ENCODE measurements at regions of chr7 and their contacts with region 1.

Region 1: GRCh38 chr7:28096713-28097112 is 83.9 kb downstream of the JAZF1 start:
- H3K4me3 ChIP-seq: no peak overlapping the region
- H3K27ac ChIP-seq: no peak overlapping the region
- H3K4me1 ChIP-seq: no peaks in the 10 kb centered on the region
- CTCF ChIP-seq: no peak

Region 2: DNA sequence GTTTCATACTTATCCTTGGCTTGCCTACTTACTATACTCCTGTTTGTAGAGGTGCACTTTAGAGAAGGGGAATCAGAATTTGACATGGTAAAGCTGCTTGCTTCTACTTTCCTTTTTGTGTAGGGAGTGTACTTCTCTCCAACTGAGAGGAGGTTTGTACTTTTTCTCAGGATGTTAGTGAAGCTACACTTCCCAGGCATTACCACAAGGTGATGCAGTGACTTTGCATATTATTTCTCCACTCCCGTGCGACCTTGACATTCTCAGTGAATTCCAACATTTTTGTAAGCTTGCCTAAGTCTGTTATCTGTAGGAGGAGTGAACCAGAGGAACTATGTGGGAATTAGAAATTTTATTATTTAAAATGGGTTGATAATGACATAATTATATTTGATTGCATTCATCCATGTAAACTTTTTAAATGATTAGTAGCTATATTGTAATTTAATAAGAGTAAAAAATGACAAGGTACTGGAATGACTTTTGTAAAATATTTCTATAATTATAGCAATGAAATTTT is 351.6 kb before region 1 on chr7:
- CTCF ChIA-PET with region 1: interaction called, 16 read pairs
- POLR2A ChIA-PET with region 1: no interaction called
- H3K4me3 ChIP-seq: no peak overlapping the region
- H3K27ac ChIP-seq: no peak overlapping the region
- H3K4me1 ChIP-seq: peaks cover 9% of the 10 kb centered on the region
- CTCF ChIP-seq: no peak; the same call in 1 of the 2 replicates

Region 3: GRCh38 chr7:28044825-28045224 is 51.9 kb before region 1 on chr7:
- CTCF ChIA-PET with region 1: interaction called, 29 read pairs
- POLR2A ChIA-PET with region 1: no interaction called
- H3K4me3 ChIP-seq: no peak overlapping the region
- H3K27ac ChIP-seq: no peak overlapping the region
- H3K4me1 ChIP-seq: no peaks in the 10 kb centered on the region
- CTCF ChIP-seq: no peak

Region 4: GRCh38 chr7:28062197-28062991 is 34.3 kb before region 1 on chr7:
- CTCF ChIA-PET with region 1: interaction called, 82 read pairs
- POLR2A ChIA-PET with region 1: interaction called, 4 read pairs
- H3K4me3 ChIP-seq: peak overlapping the region; percentile 6; the same call in 1 of the 2 replicates
- H3K27ac ChIP-seq: no peak overlapping the region
- H3K4me1 ChIP-seq: no peaks in the 10 kb centered on the region
- CTCF ChIP-seq: peak; percentile 64

Region 5: GRCh38 chr7:28083164-28083997 is 13.3 kb before region 1 on chr7:
- CTCF ChIA-PET with region 1: interaction called, 50 read pairs
- POLR2A ChIA-PET with region 1: no interaction called
- H3K4me3 ChIP-seq: no peak overlapping the region
- H3K27ac ChIP-seq: no peak overlapping the region
- H3K4me1 ChIP-seq: peaks cover 15% of the 10 kb centered on the region
- CTCF ChIP-seq: no peak

Measured in HEK293 (cell line).